CD8-positive, alpha-beta memory T cell (primary cell): ENCODE measurements at regions of chr14 and their contacts with region 1.

Region 1: GRCh38 chr14:94129111-94129757 is at the start of gene IFI27L2:
- DNase-seq: peak; percentile 45 to 80 (median 66)
- H3K4me3 ChIP-seq: peak within 1 kb of the TSS; percentile 85
- H3K4me3 Mint-ChIP-seq: peak within 1 kb of the TSS; percentile 83 to 98 (median 87)
- H3K27ac ChIP-seq: peak within 1 kb of the TSS; percentile 63
- H3K27ac Mint-ChIP-seq: peak within 1 kb of the TSS; percentile 55 to 93 (median 74)
- H3K4me1 ChIP-seq: peaks cover 16% of the 10 kb centered on the region
- H3K4me1 Mint-ChIP-seq: peaks cover 14 to 25% (median 19%) of the 10 kb centered on the region in 3 donors
- H3K27me3 ChIP-seq: no peaks in the 10 kb centered on the region
- H3K27me3 Mint-ChIP-seq: peaks cover 5 to 6% of the 10 kb centered on the region in 2 donors
- total RNA-seq, gene IFI27L2: 55.9 to 58.5 TPM

Region 2: GRCh38 chr14:94098326-94098992 is 30.8 kb before region 1 on chr14:
- CTCF ChIA-PET with region 1: no interaction called
- POLR2A ChIA-PET with region 1: no interaction called
- DNase-seq: no peak
- H3K4me3 ChIP-seq: no peak overlapping the region
- H3K4me3 Mint-ChIP-seq: no peak overlapping the region
- H3K27ac ChIP-seq: no peak overlapping the region
- H3K27ac Mint-ChIP-seq: no peak overlapping the region
- H3K4me1 ChIP-seq: no peaks in the 10 kb centered on the region
- H3K4me1 Mint-ChIP-seq: no peaks in the 10 kb centered on the region
- H3K27me3 ChIP-seq: no peaks in the 10 kb centered on the region
- H3K27me3 Mint-ChIP-seq: no peaks in the 10 kb centered on the region

Region 3: GRCh38 chr14:94143239-94143638 is 14.0 kb after region 1 on chr14:
- CTCF ChIA-PET with region 1: interaction called, 23 read pairs
- POLR2A ChIA-PET with region 1: no interaction called
- DNase-seq: no peak
- H3K4me3 ChIP-seq: no peak overlapping the region
- H3K4me3 Mint-ChIP-seq: no peak overlapping the region
- H3K27ac ChIP-seq: no peak overlapping the region
- H3K27ac Mint-ChIP-seq: peak overlapping the region in 1 of 8 donors; percentile 14
- H3K4me1 ChIP-seq: no peaks in the 10 kb centered on the region
- H3K4me1 Mint-ChIP-seq: peaks cover 17 to 27% (median 18%) of the 10 kb centered on the region in 3 donors
- H3K27me3 ChIP-seq: no peaks in the 10 kb centered on the region
- H3K27me3 Mint-ChIP-seq: peaks cover 0 to 4% of the 10 kb centered on the region in 2 donors

Region 4: GRCh38 chr14:94173885-94174603 is 44.8 kb after region 1 on chr14 and contains the start of gene PPP4R4:
- CTCF ChIA-PET with region 1: interaction called, 11 read pairs
- POLR2A ChIA-PET with region 1: no interaction called
- DNase-seq: peak; percentile 77 to 92 (median 84)
- H3K4me3 ChIP-seq: peak within 1 kb of the TSS; percentile 77
- H3K4me3 Mint-ChIP-seq: peak within 1 kb of the TSS; percentile 81 to 96 (median 85)
- H3K27ac ChIP-seq: no peak within 1 kb of the TSS
- H3K27ac Mint-ChIP-seq: peak within 1 kb of the TSS in 7 of 8 donors; percentile 13 to 90 (median 74)
- H3K4me1 ChIP-seq: peaks cover 10% of the 10 kb centered on the region
- H3K4me1 Mint-ChIP-seq: peaks cover 16 to 29% (median 24%) of the 10 kb centered on the region in 3 donors
- H3K27me3 ChIP-seq: no peaks in the 10 kb centered on the region
- H3K27me3 Mint-ChIP-seq: peaks cover 20 to 29% of the 10 kb centered on the region in 2 donors
- total RNA-seq, gene PPP4R4: 1.2 to 1.8 TPM

Region 5: GRCh38 chr14:94180655-94181271 is 51.5 kb after region 1 on chr14:
- CTCF ChIA-PET with region 1: interaction called, 20 read pairs
- POLR2A ChIA-PET with region 1: no interaction called
- DNase-seq: peak in 2 of 5 donors; percentile 62 to 63
- H3K4me3 ChIP-seq: no peak overlapping the region
- H3K4me3 Mint-ChIP-seq: peak overlapping the region; percentile 30 to 68 (median 40)
- H3K27ac ChIP-seq: peak overlapping the region; percentile 40
- H3K27ac Mint-ChIP-seq: peak overlapping the region; percentile 15 to 87 (median 45)
- H3K4me1 ChIP-seq: no peaks in the 10 kb centered on the region
- H3K4me1 Mint-ChIP-seq: peaks cover 9 to 22% (median 18%) of the 10 kb centered on the region in 3 donors
- H3K27me3 ChIP-seq: no peaks in the 10 kb centered on the region
- H3K27me3 Mint-ChIP-seq: peaks cover 13 to 37% of the 10 kb centered on the region in 2 donors

Region 6: DNA sequence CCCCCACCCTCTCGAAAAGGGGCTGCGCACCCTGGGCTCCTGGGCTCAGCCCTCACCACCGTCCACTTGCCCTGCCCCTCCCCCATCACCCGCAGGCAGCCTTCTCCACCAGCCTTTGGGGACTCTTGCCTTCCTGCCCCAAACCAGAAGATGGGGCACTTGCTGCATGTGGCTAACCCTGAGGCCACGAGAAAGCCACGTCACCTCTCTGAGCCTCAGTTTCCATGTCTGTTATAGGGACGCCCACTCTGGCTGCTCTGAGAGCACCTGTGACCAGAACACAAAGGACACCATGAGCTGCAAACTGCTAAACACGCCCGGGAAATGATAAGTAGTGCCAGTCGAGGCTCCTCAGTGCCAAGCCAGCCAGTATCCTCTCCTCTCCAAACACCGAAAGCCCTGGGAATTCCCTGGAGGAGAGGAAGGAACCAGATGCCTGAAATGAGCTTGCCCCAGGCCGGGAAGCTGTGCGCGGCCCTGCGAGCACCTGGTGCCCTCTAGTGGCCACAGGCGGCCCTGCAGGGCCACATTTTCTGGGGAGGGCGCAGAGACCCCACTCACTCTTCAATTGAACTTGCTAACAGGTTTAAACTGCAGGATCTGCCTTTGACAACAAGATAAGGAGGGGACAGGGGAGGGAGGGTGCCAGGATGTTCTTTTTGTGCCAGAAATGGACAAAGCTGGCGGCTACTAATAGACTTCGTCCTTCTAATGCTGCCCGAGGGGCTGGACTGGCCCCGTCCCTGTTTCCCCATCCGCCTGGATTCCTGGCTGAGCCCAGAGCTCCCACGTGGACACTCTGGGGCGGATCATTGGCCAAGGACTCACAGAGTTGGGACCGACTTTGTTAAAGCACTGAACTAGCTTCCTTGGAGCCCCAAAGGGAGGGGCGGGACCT is 357.0 kb after region 1 on chr14:
- CTCF ChIA-PET with region 1: interaction called, 10 read pairs
- POLR2A ChIA-PET with region 1: no interaction called
- DNase-seq: peak in 4 of 5 donors; percentile 2 to 51 (median 18)
- H3K4me3 ChIP-seq: no peak overlapping the region
- H3K4me3 Mint-ChIP-seq: no peak overlapping the region
- H3K27ac ChIP-seq: no peak overlapping the region
- H3K27ac Mint-ChIP-seq: no peak overlapping the region
- H3K4me1 ChIP-seq: no peaks in the 10 kb centered on the region
- H3K4me1 Mint-ChIP-seq: peaks cover 3 to 6% (median 6%) of the 10 kb centered on the region in 3 donors
- H3K27me3 ChIP-seq: no peaks in the 10 kb centered on the region
- H3K27me3 Mint-ChIP-seq: peaks cover 15 to 33% of the 10 kb centered on the region in 2 donors